Breast epithelium (tissue), 4 donors: ENCODE measurements at regions of chr7 and their contacts with region 1.

Region 1: DNA sequence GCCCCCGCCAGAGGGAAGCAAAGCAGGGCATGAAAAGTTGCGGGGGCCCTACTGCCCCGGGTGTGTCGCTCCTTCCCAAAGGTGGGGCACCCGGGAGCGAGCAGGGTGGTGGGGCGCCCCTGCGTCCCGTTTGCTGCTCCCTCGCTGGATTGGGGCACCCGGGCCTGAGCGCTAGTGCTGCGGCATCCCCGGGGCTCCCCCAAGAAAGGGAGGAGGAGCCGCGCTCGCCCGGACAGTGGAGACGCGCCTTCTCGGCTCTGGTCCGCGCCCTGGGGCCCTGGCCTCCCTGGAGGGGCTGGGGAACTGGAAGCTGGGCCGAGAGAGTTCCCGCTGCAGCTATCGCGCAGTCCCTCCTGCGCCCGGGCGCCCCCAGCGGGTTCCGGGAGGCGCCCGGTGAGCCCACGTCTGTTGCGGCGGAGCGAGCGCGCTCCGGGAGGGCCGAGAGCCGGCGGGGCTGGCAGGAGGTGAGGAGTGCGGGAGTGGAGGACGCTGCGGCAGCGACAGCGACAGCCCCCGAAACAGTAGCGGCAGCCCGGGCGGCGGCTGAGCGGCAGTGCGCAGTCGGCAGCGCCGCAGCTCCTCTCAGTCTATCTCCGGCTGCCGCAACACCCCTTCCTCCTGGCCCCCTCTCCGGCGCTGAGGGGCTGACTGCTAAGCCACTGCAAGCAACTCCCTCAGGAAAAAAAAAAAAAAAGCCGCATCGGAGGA is 504 bp upstream of the BMPER start:
- DNase-seq: no peak
- H3K4me3 ChIP-seq: peak overlapping the region; percentile 58 to 81 (median 59)
- H3K27ac ChIP-seq: peak overlapping the region; percentile 29 to 68
- H3K4me1 ChIP-seq: no peaks in the 10 kb centered on the region
- H3K27me3 ChIP-seq: peaks cover 0 to 29% of the 10 kb centered on the region in 2 donors
- CTCF ChIP-seq: no peak
- POLR2A ChIP-seq: no peak

Region 2: DNA sequence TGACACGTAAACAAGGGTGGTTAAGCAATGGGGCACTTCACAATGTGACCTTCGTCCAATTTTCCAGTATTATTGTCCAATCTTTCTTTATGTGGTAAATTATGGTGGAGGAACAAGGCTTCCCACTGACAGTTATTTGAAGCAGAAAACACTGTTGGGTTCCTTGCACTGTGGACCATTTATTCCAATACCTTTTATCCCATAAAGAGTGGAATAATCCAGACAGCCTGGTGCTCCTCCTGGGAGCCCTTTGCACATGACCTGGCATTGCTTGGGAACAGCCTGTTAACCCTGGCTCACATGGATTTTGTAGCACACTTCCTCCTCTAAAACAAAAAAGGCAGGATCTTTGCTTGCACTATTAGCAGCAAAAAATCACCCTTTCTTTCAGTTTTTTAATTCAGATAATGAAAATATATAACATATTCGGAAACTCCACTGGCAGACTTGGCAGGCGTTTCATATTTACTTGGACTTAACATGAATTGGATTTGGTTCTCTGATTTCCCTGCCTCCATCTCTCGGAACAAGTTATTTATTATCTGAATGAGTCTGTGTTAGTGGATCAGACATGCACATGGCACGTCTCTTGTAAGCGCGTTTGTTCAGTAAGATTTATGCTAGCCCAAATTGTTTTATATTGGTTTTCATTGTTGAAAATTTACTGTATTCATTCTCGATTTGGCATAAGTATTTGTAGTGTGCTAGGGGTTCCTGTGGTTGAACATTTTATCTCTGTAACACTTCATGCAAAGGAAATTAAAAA is 59.8 kb after region 1 on chr7:
- intact Hi-C with region 1: no loop called
- DNase-seq: no peak
- H3K4me3 ChIP-seq: no peak overlapping the region
- H3K27ac ChIP-seq: no peak overlapping the region
- H3K4me1 ChIP-seq: no peaks in the 10 kb centered on the region
- H3K27me3 ChIP-seq: no peaks in the 10 kb centered on the region
- CTCF ChIP-seq: no peak
- POLR2A ChIP-seq: no peak

Region 3: DNA sequence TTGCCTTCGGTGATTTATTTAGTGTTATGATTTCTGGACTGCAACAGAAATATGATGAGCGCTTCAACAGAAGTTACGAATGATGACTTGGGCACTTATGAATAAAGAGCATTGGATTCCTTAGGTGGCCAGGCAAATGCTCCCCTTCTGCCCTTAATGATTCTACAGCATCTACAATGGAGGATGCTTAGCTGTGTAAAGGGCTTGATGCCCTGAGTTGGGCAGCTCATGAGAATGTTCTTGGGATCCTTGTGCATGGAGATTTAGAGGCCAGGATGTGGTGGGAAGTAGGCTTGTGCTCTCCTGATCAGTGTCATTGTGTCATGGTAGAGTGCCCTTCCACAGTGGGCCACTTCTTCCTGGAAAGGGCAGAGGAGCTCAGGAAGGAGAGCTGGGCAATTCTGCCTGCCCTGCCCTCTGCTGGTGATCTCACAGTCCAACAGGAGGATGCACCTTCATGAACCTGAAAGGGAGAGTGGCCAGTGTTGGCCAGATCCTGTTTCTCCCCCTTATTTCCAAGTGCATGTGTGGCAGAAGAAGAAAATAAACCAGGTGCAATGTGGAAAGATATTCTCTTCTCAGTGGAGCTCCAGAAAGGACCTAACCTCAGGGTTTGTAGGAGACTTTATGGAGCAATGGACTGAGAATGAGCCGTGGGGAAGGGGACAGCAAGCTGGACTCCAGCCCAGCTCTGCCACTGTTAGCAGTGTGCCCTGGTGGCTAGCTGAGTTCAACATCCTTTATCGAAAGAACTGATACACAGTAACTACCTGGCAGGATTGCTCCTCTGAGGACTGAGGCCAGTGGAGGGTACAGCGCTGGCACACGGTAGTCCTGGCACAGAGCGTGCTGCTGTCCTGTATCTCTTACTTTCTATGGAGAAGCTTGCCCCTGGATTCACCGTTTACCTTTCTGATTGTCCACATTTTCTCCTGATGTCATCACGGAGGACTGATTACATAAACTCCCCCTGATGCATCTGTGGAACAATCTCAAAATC is 183.4 kb after region 1 on chr7:
- intact Hi-C with region 1: loop called (anchors 10 kb)
- DNase-seq: no peak
- H3K4me3 ChIP-seq: no peak overlapping the region
- H3K27ac ChIP-seq: no peak overlapping the region
- H3K4me1 ChIP-seq: no peaks in the 10 kb centered on the region
- H3K27me3 ChIP-seq: no peaks in the 10 kb centered on the region
- CTCF ChIP-seq: no peak
- POLR2A ChIP-seq: no peak